Motor neuron (in vitro differentiated cells): ENCODE measurements at regions of chr14 and their contacts with region 1.

Region 1: DNA sequence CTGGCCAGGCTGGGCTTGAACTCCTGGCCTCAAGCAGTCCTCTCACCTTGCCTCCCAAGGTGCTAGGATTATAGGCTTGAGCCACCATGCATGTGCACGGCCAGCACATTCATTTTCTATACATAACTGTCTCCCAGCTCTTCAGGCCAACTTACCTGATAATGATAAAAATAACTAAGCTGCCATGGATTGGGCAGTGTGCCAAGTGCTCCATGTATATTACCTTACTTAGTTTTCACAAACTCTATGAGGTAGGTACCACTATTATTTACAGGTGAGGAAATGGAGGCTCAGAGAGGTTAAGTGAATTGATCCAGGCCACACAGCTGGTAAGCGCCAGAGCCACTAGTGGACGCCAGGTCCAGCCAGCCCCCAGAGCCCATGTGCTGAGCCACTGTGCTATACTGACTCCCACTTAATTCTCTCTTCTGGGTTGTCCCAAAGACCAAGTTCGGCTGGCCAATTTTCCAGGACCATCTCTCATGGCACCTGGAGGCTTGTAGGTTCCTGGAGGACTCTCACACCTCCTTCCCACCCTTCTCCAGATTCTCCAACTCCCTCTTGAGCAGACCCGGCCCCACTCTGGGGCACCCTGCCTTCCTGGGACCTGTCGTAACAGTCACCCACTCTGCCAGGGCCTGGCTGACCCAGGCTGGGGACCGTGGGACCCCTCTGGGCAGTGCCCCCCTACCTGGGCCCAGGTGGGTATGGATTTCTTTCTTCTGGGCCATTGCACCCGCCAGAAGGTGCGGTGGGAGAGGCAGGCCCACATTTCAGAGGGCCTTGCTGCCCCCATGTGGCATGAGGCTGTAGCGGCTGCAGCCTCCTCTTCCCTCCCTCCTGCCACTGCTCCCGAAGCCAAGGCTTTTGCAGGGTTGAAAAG is 30.2 kb upstream of the CIPC start:
- ATAC-seq: peak; percentile 58 to 83 (median 70)
- H3K4me3 ChIP-seq: no peak overlapping the region
- H3K27ac ChIP-seq: no peak overlapping the region
- H3K4me1 ChIP-seq: peaks cover 33 to 38% of the 10 kb centered on the region in 2 donors

Region 2: GRCh38 chr14:76672123-76672522 is 395.8 kb before region 1 on chr14:
- in situ Hi-C with region 1: no loop called
- ATAC-seq: no peak
- H3K4me3 ChIP-seq: no peak overlapping the region
- H3K27ac ChIP-seq: no peak overlapping the region
- H3K4me1 ChIP-seq: no peaks in the 10 kb centered on the region

Region 3: DNA sequence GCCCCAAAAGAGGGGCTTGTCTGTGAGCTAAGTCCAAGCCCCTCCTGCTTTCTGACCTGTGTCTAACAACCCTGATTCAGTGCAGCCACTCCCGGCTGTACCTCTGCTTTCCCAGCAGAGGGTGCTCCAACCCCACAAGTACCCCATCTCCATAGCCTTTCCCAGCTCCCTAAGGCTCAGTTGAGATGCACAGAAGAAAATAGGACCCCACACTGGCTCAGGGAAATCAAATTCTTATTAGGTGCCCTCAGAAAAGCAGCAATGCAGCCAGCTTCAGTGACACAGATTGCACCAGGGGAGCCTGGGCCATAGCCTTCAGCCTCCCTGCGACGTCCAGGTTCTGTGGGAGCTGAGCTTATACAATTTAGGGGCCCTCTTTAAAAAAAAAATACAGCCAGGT is 191.8 kb before region 1 on chr14:
- in situ Hi-C with region 1: loop called in 3 of 9 experiments (anchors 10 kb)
- ATAC-seq: peak; percentile 88 to 99 (median 97)
- H3K4me3 ChIP-seq: no peak overlapping the region
- H3K27ac ChIP-seq: no peak overlapping the region
- H3K4me1 ChIP-seq: peaks cover 2% of the 10 kb centered on the region in 2 donors

Region 4: DNA sequence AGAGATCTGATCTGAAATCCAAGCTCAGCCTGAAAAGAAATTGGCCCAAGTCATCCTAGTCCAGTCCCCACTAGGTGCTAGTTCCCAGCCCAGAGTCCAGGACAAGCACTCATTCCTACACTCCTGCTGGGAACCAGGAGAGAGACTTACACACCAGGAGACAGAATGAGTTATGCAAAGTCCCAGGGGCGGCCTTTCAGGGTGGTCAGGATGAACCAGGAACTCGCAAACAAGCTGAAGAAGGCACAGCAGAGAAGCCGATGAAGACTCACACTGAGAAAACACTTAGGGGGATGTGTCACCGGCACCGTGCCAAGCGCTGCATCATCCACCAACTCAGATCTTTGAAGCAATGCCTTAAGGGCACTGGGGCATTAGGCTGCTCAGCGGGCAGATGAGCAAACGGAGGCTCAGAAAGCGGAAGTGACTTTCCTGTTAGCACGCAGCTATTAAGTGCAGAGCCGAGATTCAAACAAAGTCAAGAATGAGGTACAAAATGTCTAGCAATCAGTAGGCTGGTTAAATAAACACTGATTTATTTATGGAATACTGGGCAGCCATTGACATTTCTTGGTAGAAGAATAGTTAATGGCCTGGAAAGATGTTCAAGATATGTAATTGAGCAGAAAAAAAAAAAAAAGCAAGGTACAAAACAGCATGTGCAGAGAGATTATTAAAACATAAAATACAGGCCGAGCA is 163.0 kb before region 1 on chr14:
- in situ Hi-C with region 1: loop called in 5 of 9 experiments (anchors 25 kb)
- ATAC-seq: peak; percentile 20 to 88 (median 56)
- H3K4me3 ChIP-seq: no peak overlapping the region
- H3K27ac ChIP-seq: no peak overlapping the region
- H3K4me1 ChIP-seq: peaks cover 12 to 15% of the 10 kb centered on the region in 2 donors